ENCODE measurements at regions of chr2 and their contacts with region 1.

Region 1: DNA sequence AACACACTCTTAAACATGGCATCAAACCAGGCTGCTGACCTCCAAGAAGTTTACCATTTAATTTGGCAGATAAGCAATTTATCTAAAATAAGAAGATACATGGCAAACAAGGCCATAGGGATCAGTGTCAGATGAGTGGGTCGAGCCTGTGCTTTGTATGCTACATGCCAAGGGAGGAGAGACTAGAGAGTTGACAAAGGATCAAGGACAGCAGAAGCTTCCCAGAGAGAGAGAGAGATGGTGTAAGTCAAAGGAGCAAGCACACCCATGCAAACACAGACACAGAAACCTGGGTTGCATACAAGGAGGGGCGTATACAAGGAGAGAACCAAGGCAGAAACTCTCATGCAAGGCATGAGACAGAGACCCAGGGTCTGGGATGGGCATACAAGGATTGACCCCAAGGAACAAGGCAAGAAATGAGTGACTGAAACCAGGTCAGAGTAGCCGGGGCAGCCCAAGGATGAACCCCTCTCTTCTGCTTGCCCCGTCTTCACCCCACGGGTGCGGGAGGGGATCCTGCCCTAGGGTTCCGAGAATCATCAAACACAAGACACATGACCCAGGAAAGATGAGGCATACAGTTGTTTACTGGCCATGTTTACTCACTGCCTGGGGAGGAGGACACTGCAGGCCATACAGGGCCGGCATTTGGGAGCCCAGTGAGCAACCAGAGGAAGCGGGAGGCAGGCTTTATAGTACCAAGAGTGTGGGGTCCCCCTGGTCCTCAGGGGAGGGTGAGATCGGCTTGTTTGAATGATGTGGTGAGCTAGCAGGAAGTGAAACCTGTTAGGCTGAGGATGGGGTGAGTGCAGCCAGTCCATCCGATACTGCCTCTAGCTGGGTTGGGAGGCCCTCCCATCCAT is 529.2 kb upstream of the ID2 start:
- DNase-seq: no peak
- H3K4me3 Mint-ChIP-seq: no peak overlapping the region
- H3K27ac Mint-ChIP-seq: peak overlapping the region; percentile 62
- H3K4me1 Mint-ChIP-seq: peaks cover 38% of the 10 kb centered on the region
- H3K27me3 Mint-ChIP-seq: no peaks in the 10 kb centered on the region

Region 2: DNA sequence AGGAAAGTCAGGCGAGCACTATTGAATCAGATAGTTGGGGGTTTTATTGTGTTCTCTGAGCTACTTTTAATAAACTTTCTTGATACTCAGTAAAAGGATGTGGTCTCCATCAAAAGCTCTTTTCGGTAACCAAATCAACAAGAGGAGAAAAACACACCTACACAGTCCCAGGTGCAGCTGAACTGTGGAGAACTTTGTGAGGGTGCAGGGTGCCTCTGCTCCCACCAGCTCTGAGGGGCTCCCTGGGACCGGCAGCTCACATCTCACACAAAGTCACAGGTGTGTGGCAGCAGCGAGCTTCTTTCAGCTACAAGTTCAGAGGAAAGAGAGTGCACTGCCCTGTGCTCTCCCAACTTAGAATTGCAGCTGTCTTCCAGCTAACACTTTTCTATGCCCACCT is 585.0 kb before region 1 on chr2:
- intact Hi-C with region 1: loop called (anchors 10 kb)
- DNase-seq: peak; percentile 47
- H3K4me3 Mint-ChIP-seq: peak overlapping the region; percentile 25
- H3K27ac Mint-ChIP-seq: peak overlapping the region; percentile 90
- H3K4me1 Mint-ChIP-seq: peaks cover 59% of the 10 kb centered on the region
- H3K27me3 Mint-ChIP-seq: no peaks in the 10 kb centered on the region

Region 3: GRCh38 chr2:7930800-7931635 is 221.6 kb before region 1 on chr2:
- intact Hi-C with region 1: loop called (anchors 10 kb)
- DNase-seq: no peak
- H3K4me3 Mint-ChIP-seq: no peak overlapping the region
- H3K27ac Mint-ChIP-seq: peak overlapping the region; percentile 81
- H3K4me1 Mint-ChIP-seq: peaks cover 11% of the 10 kb centered on the region
- H3K27me3 Mint-ChIP-seq: no peaks in the 10 kb centered on the region

Region 4: GRCh38 chr2:8076448-8077342 is 75.9 kb before region 1 on chr2:
- intact Hi-C with region 1: loop called (anchors 5 kb)
- DNase-seq: no peak
- H3K4me3 Mint-ChIP-seq: no peak overlapping the region
- H3K27ac Mint-ChIP-seq: peak overlapping the region; percentile 27
- H3K4me1 Mint-ChIP-seq: peaks cover 18% of the 10 kb centered on the region
- H3K27me3 Mint-ChIP-seq: no peaks in the 10 kb centered on the region

Region 5: GRCh38 chr2:8234757-8235374 is 82.2 kb after region 1 on chr2:
- intact Hi-C with region 1: loop called (anchors 1 kb)
- DNase-seq: no peak
- H3K4me3 Mint-ChIP-seq: no peak overlapping the region
- H3K27ac Mint-ChIP-seq: no peak overlapping the region
- H3K4me1 Mint-ChIP-seq: peaks cover 53% of the 10 kb centered on the region
- H3K27me3 Mint-ChIP-seq: peaks cover 9% of the 10 kb centered on the region

Region 6: DNA sequence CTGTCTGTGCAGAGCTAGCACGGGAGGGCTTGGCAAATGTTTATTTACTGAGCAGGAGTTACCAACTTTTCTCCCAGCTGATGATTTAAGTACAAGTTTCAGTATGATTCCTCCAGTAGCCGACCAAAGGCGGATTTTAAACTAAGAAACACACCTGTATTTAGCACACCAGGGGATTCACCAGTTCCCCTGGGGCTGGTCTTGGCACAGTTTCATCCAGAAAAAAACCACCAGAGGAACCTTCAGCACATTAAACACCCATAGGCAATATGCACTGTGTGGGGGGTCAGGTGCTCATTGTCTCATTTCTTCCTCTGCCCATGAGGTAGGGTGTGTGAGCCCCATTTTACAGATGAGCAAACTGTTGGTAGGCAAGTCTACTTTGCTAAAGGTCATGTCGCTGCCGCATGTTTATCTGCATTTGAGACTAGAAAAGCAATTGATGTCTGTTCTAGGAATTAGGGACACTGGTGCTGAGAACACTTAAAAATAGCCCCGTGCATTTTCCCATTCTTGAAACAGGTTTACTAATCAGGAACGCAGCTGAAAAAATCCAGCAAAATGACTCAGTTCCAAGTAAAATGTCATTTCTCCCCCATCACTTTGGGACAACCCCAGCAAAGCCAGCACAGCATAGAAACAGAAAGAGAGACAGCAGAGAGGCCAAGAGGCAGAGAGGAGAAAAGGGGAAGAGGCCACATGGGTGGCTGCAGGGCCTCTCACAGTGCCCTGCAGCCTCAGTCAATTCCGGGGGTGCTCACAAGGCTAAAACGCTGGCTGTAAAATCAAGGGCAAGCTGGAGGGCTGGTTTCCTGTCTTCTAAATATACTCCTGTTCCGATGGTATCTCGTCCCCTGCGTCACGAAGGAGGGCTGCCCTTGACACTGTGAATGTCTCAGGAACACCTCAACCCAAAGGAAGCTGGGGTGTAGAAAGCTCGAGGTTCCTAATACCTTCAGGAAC is 362.5 kb after region 1 on chr2:
- intact Hi-C with region 1: loop called (anchors 1 kb)
- DNase-seq: peak; percentile 58
- H3K4me3 Mint-ChIP-seq: peak overlapping the region; percentile 35
- H3K27ac Mint-ChIP-seq: peak overlapping the region; percentile 95
- H3K4me1 Mint-ChIP-seq: peaks cover 68% of the 10 kb centered on the region
- H3K27me3 Mint-ChIP-seq: no peaks in the 10 kb centered on the region